Dorsolateral prefrontal cortex (tissue), 120 donors: ENCODE measurements at regions of chr6 and their contacts with region 1.

Region 1: GRCh38 chr6:32984605-32985389 is 16.4 kb downstream of the BRD2 start:
- DNase-seq: peak; percentile 85 to 96 (median 88)
- H3K4me3 ChIP-seq: peak overlapping the region in 3 of 59 donors; percentile 5 to 21 (median 17)
- H3K27ac ChIP-seq: peak overlapping the region in 9 of 59 donors; percentile 1 to 38 (median 22)
- H3K27me3 ChIP-seq: no peaks in the 10 kb centered on the region
- CTCF ChIP-seq: peak; percentile 66 to 98 (median 90)

Region 2: GRCh38 chr6:32838114-32838958 is 146.5 kb before region 1 on chr6 and contains the start of gene TAP2:
- intact Hi-C with region 1: loop called in 1 of 2 experiments (anchors 5 kb)
- DNase-seq: peak; percentile 90 to 97 (median 96)
- H3K4me3 ChIP-seq: peak within 1 kb of the TSS; percentile 52 to 94 (median 81)
- H3K27ac ChIP-seq: peak within 1 kb of the TSS; percentile 73 to 99 (median 96)
- H3K27me3 ChIP-seq: no peaks in the 10 kb centered on the region
- CTCF ChIP-seq: peak; percentile 85 to 100 (median 97)
- total RNA-seq, gene TAP2: 12.3 to 50.8 (median 24.2) TPM

Region 3: DNA sequence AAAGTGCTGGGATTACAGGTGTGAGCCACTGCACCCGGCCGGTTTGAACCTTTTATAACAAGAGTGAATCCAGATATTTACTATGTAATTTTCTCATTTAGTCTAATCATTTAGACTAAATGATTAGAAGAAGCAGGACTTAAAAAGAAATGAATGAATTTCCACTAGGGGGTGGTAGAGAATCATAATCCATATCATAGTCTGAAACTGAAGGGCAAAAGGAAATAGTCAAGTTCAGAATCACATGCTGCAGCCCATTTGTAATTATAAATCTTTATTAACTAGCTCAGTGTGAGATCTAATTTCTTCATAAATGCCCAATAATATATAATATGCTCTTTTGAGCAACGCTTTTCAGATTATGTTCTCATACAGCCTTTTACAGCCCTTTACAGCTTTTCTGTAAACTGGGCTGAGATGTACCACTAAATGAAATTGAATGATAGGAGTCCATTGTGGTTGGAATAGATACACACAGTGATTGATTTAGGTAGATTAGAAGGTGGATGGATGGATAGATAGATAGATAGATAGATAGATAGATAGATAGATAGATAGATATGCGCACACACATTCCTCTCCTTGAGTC is 99.0 kb before region 1 on chr6:
- intact Hi-C with region 1: loop called in 1 of 2 experiments (anchors 1 kb)
- DNase-seq: no peak
- H3K4me3 ChIP-seq: peak overlapping the region in 1 of 59 donors; percentile 1
- H3K27ac ChIP-seq: peak overlapping the region in 5 of 59 donors; percentile 10 to 63 (median 47)
- H3K27me3 ChIP-seq: no peaks in the 10 kb centered on the region
- CTCF ChIP-seq: peak; percentile 61 to 90 (median 79)

Region 4: DNA sequence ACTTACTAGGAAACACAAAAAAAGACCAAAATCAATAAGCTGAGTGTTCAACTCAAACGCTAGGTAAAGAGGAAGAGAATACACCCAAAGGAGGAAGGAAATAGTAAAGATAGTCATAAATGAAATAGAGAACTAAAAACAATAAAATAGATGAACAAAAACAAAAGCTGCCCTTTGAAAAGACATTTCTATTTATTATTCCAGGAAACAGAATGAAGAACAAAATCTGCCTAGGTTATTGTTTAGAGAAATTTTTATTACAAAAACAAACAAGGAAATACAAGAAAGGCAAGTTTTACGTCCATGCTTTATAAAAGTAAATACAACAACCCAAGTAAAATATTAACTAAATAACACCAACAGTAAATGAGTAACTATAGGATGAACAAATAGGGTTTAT is 64.1 kb before region 1 on chr6:
- intact Hi-C with region 1: no loop called
- DNase-seq: no peak
- H3K4me3 ChIP-seq: no peak overlapping the region
- H3K27ac ChIP-seq: no peak overlapping the region
- H3K27me3 ChIP-seq: peaks cover 0 to 7% (median 0%) of the 10 kb centered on the region in 45 donors
- CTCF ChIP-seq: no peak

Region 5: GRCh38 chr6:32933636-32934085 is 51.1 kb before region 1 on chr6:
- intact Hi-C with region 1: loop called in 1 of 2 experiments (anchors 2 kb)
- DNase-seq: peak in 9 of 10 donors; percentile 46 to 79 (median 67)
- H3K4me3 ChIP-seq: peak overlapping the region in 1 of 59 donors; percentile 13
- H3K27ac ChIP-seq: no peak overlapping the region
- H3K27me3 ChIP-seq: no peaks in the 10 kb centered on the region
- CTCF ChIP-seq: peak; percentile 67 to 93 (median 83)

Region 6: DNA sequence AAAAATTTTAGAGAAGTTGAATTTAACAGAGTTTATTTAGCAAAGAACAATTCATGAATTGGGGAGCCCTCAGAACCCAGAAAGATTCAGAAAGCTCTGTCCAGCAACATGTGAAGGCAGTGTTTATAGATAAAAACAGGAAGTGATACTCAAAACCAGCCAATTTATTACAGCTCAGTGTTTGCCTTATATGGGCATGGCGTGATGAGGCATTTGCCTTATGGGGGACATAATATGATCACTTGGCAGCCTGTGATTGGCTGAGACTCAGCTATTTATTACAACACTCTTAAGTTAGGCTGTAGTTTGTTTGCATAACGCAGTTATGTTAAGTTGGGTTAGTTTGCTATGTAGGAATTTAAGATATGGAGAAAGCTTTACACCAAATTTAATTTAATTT is 77.2 kb after region 1 on chr6:
- intact Hi-C with region 1: no loop called
- DNase-seq: no peak
- H3K4me3 ChIP-seq: no peak overlapping the region
- H3K27ac ChIP-seq: no peak overlapping the region
- H3K27me3 ChIP-seq: no peaks in the 10 kb centered on the region
- CTCF ChIP-seq: no peak